Caco-2 (cell line): ENCODE measurements at regions of chr2 and their contacts with region 1.

Region 1: DNA sequence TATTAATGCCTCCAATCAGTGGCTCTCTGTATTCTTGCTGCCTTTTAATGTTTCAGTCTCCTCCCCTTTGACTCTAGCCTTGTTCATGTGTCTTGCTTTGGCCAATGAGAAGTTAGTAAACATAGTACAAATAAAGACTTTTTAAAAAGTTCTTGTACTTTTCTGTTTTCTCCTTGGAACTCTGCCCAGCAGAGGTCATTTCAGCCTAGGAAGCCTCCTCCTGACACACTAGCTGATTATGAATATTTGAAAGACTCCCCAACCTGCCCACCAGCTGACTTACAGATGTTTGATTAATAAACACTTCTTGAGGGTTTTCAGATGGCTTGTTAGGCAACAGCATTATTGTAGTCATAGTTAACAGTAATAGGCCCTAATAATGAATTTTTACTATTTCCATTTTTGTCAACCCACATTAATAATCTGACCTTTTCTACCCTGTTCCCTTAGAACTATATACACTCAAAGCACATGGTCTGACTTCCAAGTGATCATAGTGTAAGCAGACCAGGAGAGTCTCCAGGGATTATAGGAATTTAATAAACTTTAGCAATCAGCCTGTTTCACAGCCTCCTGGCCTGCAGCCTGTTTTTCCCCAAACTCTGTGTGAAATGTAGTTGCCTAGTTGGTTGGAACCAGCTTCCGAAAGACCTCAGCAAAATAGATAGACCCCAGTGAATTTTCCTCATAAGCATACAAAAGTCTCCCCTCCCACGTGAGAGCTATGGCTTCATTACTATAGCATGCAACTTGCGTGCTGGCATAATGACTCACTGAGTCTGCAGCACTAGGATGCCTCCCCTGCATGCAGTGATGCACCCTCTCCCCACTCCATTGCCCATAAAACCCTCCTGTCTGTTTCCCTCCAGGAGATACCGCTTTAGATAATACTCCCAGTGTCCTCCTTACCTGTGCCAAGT is 670.7 kb upstream of the ZNF804A start:
- DNase-seq: no peak
- H3K4me3 ChIP-seq: no peak overlapping the region
- H3K4me3 Mint-ChIP-seq: no peak overlapping the region
- H3K27ac Mint-ChIP-seq: no peak overlapping the region
- H3K4me1 ChIP-seq: no peaks in the 10 kb centered on the region
- H3K4me1 Mint-ChIP-seq: no peaks in the 10 kb centered on the region
- H3K27me3 ChIP-seq: no peaks in the 10 kb centered on the region
- H3K27me3 Mint-ChIP-seq: no peaks in the 10 kb centered on the region
- CTCF ChIP-seq: no peak

Region 2: DNA sequence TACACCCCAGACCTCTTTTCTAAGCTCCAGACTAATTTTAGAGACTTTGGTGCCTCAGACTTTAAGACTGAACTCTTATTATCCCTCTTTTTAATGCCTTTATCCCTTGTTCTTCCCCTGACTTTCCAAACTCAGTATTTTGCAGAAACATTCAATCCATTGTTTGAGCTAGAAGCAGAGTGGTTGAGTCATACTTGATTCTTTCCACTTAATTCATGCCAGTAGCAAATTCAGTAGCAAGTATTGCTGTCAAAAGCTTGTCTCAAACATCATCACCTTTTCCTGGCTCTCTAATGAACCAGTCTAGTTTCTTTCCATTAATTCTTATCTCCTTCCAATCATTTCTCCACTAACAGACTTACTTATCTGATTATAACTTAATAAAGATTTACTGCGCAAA is 29.0 kb before region 1 on chr2:
- CTCF ChIA-PET with region 1: no interaction called
- POLR2A ChIA-PET with region 1: no interaction called
- intact Hi-C with region 1: loop called (anchors 1 kb)
- DNase-seq: no peak
- H3K4me3 ChIP-seq: no peak overlapping the region
- H3K4me3 Mint-ChIP-seq: no peak overlapping the region
- H3K27ac Mint-ChIP-seq: no peak overlapping the region
- H3K4me1 ChIP-seq: no peaks in the 10 kb centered on the region
- H3K4me1 Mint-ChIP-seq: no peaks in the 10 kb centered on the region
- H3K27me3 ChIP-seq: no peaks in the 10 kb centered on the region
- H3K27me3 Mint-ChIP-seq: no peaks in the 10 kb centered on the region
- CTCF ChIP-seq: no peak